HepG2 (cell line): ENCODE measurements at regions of chr5 and their contacts with region 1.

Region 1: DNA sequence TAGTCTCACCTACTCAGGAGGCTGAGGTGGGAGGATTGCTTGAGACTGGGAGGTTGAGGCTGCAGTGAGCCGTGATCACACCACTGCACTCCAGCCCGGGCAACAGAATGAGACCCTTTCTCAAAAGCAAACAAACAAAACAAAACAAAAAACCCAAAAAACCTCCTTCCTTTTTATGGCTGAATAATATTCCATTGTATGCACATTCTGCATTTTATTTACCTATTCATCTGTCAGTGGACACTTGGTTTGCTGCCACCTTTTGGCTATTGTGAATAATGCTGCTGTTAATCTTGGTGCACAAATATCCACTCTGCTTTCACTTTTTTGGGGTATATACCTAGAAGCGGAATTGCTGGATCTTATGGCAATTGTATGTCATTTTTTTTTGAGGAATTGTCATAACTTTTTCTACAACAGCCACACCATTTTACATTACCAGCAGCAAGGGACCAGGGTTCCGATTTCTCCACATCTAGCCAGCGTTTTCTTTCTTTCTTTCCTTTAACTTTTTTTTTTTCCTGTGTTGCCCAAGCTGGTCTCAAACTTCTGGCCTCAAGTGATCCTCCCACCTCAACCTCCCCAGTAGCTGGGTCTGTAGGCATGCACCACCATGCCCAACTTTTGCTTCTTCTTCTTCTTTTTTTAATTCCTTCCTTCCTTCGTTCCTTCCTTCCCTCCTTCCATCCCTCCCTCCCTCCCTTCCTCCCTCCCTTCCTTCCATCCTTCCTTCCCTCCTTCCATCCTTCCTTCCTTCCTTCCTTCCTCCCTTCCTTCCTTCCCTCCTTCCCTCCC is 30.6 kb downstream of the NKX2-5 start:
- DNase-seq: peak; percentile 42
- ATAC-seq: no peak
- H3K4me3 ChIP-seq: no peak overlapping the region
- H3K27ac ChIP-seq: no peak overlapping the region
- H3K4me1 ChIP-seq: no peaks in the 10 kb centered on the region
- H3K27me3 ChIP-seq: peaks cover 1 to 21% of the 10 kb centered on the region in 2 experiments
- CTCF ChIP-seq: peak; percentile 67
- EP300 ChIP-seq: no peak
- POLR2A ChIP-seq: no peak
- RAD21 ChIP-seq: no peak

Region 2: DNA sequence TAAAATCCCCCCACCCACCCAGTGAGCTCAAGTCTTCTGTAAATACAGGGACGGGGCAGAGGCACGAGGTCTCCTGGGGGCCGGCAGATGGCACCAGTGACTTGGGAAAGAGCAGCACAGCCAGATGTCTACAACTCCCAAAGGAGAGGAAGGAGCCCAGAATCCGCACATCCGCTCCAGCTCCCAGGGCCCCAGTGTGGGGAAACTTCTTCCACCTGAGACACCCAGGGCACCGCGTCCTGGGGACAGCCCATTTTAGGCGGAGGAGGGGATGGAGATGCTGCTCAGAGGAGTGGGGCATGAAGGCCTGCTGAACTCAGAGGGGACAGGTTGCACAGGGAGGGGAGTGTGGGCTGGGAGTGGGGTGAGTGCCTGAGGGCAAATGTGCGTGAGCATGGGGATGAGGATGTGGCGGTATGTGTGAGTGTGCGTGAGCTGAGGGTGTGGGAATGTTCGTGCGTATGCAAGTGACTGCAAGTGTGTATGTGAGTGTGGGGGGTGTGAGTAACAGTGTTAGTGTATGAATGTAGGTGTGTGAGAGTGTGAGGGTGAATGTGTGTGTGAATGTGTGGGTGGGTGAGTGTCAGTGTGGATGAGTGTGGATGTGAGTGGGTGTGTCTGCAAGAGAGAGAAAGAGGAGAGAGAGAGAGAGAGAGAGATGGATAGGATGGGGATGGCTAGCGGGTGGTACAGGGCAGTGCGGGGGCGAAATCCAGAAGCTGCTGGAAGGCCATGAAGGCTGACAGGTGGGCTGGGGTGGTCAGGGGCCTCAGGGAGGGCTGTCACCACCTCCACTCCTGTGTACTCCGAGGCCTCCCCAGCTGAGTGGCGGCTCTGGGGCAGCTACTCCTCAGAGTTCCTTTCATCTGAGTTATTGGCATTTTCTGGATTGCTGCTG is 496.8 kb before region 1 on chr5:
- CTCF ChIA-PET with region 1: interaction called, 3 read pairs
- POLR2A ChIA-PET with region 1: no interaction called
- in situ Hi-C with region 1: loop called (anchors 10 kb)
- intact Hi-C with region 1: no loop called
- DNase-seq: peak; percentile 58
- ATAC-seq: peak; percentile 96
- H3K4me3 ChIP-seq: no peak overlapping the region
- H3K27ac ChIP-seq: no peak overlapping the region
- H3K4me1 ChIP-seq: peaks cover 20% of the 10 kb centered on the region
- H3K27me3 ChIP-seq: peaks cover 4 to 23% of the 10 kb centered on the region in 2 experiments; a peak in 4 of 5 replicates
- CTCF ChIP-seq: peak; percentile 88
- EP300 ChIP-seq: no peak
- POLR2A ChIP-seq: no peak
- RAD21 ChIP-seq: peak; percentile 85

Region 3: GRCh38 chr5:173689737-173690360 is 485.5 kb after region 1 on chr5:
- CTCF ChIA-PET with region 1: no interaction called
- POLR2A ChIA-PET with region 1: no interaction called
- in situ Hi-C with region 1: no loop called
- intact Hi-C with region 1: no loop called
- DNase-seq: peak; percentile 23
- ATAC-seq: peak; percentile 66
- H3K4me3 ChIP-seq: peak overlapping the region; percentile 59 to 74 (median 72)
- H3K27ac ChIP-seq: peak overlapping the region; percentile 68
- H3K4me1 ChIP-seq: peaks cover 68% of the 10 kb centered on the region
- H3K27me3 ChIP-seq: no peaks in the 10 kb centered on the region; a peak in 1 of 5 replicates
- CTCF ChIP-seq: no peak
- EP300 ChIP-seq: no peak
- POLR2A ChIP-seq: no peak; a peak in 1 of 4 replicates
- RAD21 ChIP-seq: no peak